ENCODE measurements at regions of chr11 and their contacts with region 1.

Region 1: GRCh38 chr11:10943968-10944367 is 86.1 kb upstream of the ZBED5 start:
- DNase-seq: no peak
- H3K4me3 ChIP-seq: no peak overlapping the region
- H3K27ac ChIP-seq: no peak overlapping the region
- H3K4me1 ChIP-seq: no peaks in the 10 kb centered on the region
- H3K27me3 ChIP-seq: no peaks in the 10 kb centered on the region
- CTCF ChIP-seq: no peak

Region 2: GRCh38 chr11:10716127-10716526 is 227.8 kb before region 1 on chr11:
- intact Hi-C with region 1: no loop called
- DNase-seq: no peak
- H3K4me3 ChIP-seq: no peak overlapping the region
- H3K27ac ChIP-seq: no peak overlapping the region
- H3K4me1 ChIP-seq: no peaks in the 10 kb centered on the region
- H3K27me3 ChIP-seq: no peaks in the 10 kb centered on the region
- CTCF ChIP-seq: no peak

Region 3: DNA sequence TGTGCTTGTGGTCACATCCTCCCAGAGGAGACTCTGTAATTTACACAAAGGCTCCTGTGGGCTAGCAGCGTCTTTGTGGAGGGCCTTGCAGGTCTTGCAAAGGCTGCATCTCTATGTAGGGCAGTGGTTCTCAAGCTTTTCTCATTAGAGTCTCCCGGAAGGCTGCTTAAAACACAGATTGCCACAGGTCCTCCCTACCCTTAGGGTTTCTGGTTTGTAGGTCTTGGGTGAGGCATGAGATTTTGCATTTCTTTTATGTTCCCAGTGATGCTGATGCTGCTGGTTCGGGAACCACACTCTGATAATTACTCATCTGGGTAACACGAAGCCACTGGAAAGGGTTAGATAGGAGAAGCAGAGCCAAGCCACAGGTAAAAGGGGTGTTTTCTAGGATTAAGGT is 65.2 kb after region 1 on chr11:
- intact Hi-C with region 1: loop called (anchors 5 kb)
- DNase-seq: no peak
- H3K4me3 ChIP-seq: no peak overlapping the region
- H3K27ac ChIP-seq: no peak overlapping the region
- H3K4me1 ChIP-seq: no peaks in the 10 kb centered on the region
- H3K27me3 ChIP-seq: no peaks in the 10 kb centered on the region
- CTCF ChIP-seq: no peak

Region 4: GRCh38 chr11:11555208-11555607 is 611.2 kb after region 1 on chr11:
- intact Hi-C with region 1: no loop called
- DNase-seq: no peak
- H3K4me3 ChIP-seq: no peak overlapping the region
- H3K27ac ChIP-seq: no peak overlapping the region
- H3K4me1 ChIP-seq: no peaks in the 10 kb centered on the region
- H3K27me3 ChIP-seq: no peaks in the 10 kb centered on the region
- CTCF ChIP-seq: no peak

Measured in colonic mucosa (tissue), 4 donors.